Posterior vena cava (tissue), 2 donors: ENCODE measurements at regions of chr17 and their contacts with region 1.

Region 1: DNA sequence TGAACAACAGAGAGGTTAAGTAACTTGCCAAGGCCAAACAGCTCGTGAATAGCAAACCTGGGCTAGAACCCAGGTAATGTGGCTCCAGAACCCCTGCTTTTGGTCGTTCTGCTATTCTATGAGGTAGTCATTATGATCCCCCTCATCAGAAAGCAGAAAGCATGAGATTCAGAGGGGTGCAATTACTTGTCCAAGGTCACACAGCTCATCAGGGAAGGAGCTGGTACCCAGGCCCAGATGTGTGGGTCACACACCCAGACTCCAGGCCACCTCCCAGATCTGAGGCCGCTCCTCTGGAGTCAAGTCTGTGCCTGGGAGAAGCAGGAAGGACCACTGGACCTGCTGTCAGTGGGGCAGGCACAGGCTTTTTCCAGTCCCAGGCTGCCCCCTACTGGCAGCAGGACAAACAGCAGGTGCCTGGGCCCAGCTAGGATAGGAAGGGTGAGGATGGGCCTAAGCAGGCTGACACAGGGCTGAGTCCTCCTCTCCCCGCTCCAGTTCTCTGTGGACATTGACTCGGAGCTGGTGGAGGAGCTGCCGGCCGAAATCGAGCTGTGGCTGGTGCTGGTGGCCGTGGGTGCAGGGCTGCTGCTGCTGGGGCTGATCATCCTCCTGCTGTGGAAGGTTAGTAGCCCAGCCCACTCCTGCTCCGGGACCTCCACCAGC is 7.8 kb upstream of the PDK2 start:
- DNase-seq: peak; percentile 90

Region 2: DNA sequence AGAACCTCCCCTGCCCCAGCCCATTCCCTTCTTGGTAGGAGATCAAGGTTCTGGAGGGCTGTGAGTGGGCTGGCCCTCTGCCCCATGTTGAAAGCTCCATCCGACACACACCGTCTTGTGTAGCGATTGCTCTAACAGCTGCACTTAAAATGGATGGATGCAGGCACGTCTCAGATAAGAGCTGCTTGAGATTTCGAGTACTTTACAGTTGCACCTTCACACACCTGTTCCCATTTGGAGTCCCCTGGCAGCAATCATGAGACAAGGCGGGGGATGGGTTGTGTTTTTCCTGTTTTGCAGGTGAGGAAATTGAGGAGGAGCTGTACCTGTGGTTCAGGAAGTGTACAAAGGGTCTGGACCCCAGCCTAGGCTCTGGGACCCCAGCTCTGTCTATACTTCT is 213.9 kb before region 1 on chr17:
- intact Hi-C with region 1: loop called in 1 of 2 experiments (anchors 10 kb)
- DNase-seq: no peak

Region 3: GRCh38 chr17:49926886-49927285 is 160.5 kb before region 1 on chr17:
- intact Hi-C with region 1: no loop called
- DNase-seq: peak; percentile 95